Activated T-helper 1 cell treated with anti-CD3 and anti-CD28 coated beads, Interleukin-12 subunit alpha, Interleukin-12 subunit beta, Interleukin-2, Interleukin-4 antibody, amounts not matched to agents 30 ng/mL and 10 ng/mL and 1 ng/mL, durations not matched to agents 14 hours and 24 hours and 36 hours (primary cell): ENCODE measurements at regions of chr11 and their contacts with region 1.

Region 1: GRCh38 chr11:118883368-118884071 is at the start of gene CXCR5:
- DNase-seq: no peak
- H3K4me3 Mint-ChIP-seq: peak within 1 kb of the TSS; percentile 52
- H3K27ac Mint-ChIP-seq: peak within 1 kb of the TSS; percentile 87
- H3K4me1 Mint-ChIP-seq: peaks cover 50% of the 10 kb centered on the region
- H3K27me3 Mint-ChIP-seq: no peaks in the 10 kb centered on the region
- total RNA-seq, gene CXCR5: 5.1 and 5.5 TPM in 2 replicates

Region 2: DNA sequence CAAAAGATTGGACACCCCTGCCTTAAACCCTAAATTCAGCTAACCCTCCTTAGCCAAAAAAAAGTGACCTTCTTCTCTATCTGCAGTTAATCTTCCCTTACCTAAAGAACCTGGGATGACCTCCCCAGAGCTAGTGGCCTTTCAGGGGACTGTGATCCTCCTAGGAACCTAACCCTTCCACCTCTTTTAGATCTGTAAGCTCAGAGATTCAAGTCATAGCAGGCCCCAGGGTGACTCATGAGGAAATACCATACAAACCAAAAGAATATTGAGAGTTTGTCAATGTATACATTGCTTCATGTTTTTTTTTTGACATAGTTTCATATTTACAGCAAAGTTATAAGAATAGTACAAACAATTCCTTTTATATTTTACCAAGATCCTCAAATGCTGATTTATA is 38.2 kb before region 1 on chr11:
- intact Hi-C with region 1: loop called (anchors 1 kb)
- DNase-seq: no peak
- H3K4me3 Mint-ChIP-seq: no peak overlapping the region
- H3K27ac Mint-ChIP-seq: peak overlapping the region; percentile 80
- H3K4me1 Mint-ChIP-seq: peaks cover 27% of the 10 kb centered on the region
- H3K27me3 Mint-ChIP-seq: peaks cover 5% of the 10 kb centered on the region

Region 3: DNA sequence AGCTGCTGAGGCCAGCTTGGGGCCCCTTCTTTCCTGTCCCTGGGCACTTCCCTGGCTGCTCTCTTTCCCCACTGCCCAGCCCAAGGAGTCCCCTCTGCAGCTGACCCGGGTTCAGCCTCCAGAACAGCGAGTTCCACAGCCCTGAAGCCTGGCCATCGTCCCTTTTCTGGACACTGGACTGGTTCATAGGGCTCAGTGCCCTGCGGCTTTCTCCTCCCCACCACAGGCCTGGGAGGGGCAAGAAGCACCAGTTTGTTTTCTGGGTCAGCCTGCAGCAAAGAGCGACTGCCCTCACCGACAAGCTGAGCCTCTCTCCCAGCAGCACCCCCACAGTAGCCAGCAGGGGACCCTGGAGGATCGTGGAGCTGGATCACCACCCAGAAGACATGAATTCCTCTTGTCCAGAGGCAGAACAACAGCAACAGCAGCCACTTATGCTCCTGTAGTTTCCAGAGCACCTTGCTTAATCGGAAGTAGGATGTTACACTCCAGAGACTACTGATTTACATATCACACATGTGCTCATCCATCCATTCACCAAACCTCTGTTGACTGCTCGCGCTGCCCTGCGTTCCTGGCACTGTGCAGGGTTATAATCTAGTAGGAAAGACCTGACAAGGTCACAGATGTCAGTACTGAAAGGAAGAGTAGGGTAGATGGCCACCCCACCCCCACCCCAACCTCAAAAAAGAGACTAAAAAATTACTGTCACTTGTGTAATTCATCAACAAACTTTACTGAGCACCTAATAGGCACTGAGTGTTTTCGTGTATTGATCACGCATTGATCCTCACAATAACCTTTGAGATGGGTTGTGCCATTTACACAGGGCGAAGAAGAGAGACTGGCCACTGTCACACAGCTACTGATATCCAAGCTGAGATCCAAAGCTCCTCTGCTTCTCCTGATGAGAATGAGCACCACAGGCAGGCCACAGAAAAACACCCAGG is 12.8 kb before region 1 on chr11:
- intact Hi-C with region 1: loop called (anchors 1 kb)
- DNase-seq: no peak
- H3K4me3 Mint-ChIP-seq: peak overlapping the region; percentile 75
- H3K27ac Mint-ChIP-seq: peak overlapping the region; percentile 96
- H3K4me1 Mint-ChIP-seq: peaks cover 51% of the 10 kb centered on the region
- H3K27me3 Mint-ChIP-seq: no peaks in the 10 kb centered on the region

Region 4: GRCh38 chr11:118895142-118896039 is 11.9 kb after region 1 on chr11:
- intact Hi-C with region 1: loop called (anchors 1 kb)
- DNase-seq: peak; percentile 65
- H3K4me3 Mint-ChIP-seq: peak overlapping the region; percentile 32
- H3K27ac Mint-ChIP-seq: peak overlapping the region; percentile 81
- H3K4me1 Mint-ChIP-seq: peaks cover 65% of the 10 kb centered on the region
- H3K27me3 Mint-ChIP-seq: no peaks in the 10 kb centered on the region